ENCODE measurements at regions of chr9 and their contacts with region 1.

Region 1: GRCh38 chr9:123091459-123091858 is 58.0 kb downstream of the GPR21 start:
- DNase-seq: no peak
- H3K4me3 ChIP-seq: no peak overlapping the region
- H3K27me3 ChIP-seq: no peaks in the 10 kb centered on the region
- CTCF ChIP-seq: no peak

Region 2: DNA sequence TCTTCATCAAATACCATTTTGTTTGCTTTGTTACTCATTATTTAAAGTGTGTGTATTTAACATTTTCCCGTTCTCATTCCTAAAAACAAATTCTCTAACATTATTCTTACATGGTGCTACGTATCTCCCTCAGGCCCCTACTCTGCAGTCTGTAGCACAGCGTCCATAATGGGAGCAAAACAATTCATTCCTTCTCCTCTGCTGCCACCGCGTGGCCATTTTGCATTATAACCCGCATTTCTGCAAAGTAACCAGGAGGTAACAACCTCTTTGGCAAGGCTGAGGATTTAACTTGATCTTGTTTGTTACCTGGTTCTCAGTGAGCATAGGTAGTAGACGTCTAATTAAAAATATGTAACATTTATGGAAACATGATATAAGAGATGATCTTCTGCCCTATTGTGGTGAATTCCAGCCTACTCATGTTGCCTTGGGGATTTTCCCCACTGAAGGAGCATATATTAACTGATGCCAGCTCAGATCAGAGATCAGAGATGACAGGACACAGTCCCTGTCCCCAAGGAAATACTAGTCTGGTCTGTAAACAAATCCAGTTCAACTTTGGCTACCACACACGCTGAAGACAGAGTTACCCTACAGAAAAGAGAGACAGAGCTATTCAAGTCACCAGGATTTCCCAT is 281.0 kb before region 1 on chr9:
- CTCF ChIA-PET with region 1: no interaction called
- POLR2A ChIA-PET with region 1: no interaction called
- DNase-seq: no peak
- H3K4me3 ChIP-seq: no peak overlapping the region
- H3K27me3 ChIP-seq: no peaks in the 10 kb centered on the region
- CTCF ChIP-seq: peak; percentile 59

Region 3: GRCh38 chr9:122835313-122835731 is 256.1 kb before region 1 on chr9:
- CTCF ChIA-PET with region 1: no interaction called
- POLR2A ChIA-PET with region 1: no interaction called
- DNase-seq: no peak
- H3K4me3 ChIP-seq: no peak overlapping the region
- H3K27me3 ChIP-seq: no peaks in the 10 kb centered on the region
- CTCF ChIP-seq: 0 out of 2 replicates have a peak, but pooled peaks have one; percentile 7

Region 4: DNA sequence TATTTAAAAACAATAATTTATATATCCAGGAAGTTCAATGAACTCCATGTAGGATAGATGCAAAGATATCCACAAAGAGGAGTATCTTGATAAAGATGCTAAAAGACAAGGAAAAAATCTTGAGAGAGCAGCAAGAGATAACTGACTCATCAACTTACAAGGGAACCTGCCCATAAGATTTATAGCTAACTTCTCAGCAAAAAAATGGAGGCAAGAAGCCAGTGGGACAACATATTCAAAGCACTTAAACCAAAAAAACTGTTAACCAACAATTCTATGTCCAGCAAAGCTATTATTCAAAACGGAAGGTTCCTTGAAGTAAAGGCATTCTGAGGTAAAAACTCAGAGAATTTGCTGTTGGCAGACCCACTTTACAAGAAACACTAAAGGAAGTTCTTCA is 130.3 kb before region 1 on chr9:
- CTCF ChIA-PET with region 1: no interaction called
- POLR2A ChIA-PET with region 1: no interaction called
- DNase-seq: no peak
- H3K4me3 ChIP-seq: no peak overlapping the region
- H3K27me3 ChIP-seq: no peaks in the 10 kb centered on the region
- CTCF ChIP-seq: no peak

Region 5: DNA sequence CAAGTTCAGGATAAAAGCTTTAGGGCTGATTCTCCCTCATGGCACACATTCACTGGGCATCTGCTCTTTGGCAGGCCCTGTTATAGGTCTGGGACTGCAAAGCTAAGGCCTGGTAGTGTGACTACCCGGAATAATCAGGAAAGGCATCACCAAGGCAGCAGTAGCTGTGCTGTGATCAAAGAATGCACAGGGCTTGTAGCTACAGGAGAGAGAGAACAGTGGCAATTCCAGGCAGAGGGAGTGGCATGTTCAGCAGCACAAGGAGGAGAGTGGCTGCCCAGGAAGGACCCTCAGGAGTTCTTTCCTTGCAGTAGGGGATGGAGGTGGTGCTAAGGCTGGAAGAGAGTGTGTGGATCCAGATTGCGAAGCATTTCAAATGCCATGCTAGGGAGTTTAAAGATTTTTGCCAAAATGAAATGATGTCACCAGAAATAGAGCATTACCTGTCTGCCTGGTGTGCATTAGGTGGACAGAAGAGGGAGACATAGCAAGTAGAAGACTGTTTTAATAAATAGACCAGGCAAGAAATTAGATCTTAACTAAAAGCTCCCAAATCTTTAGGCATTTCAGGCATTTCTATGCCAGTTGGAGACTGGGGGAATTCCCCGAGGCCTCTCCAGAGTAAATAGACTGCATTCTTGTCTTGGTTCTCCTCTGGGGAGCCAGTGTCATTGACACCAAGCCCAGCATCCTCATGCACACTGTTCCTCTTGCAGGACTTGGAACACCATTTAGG is 11.1 kb after region 1 on chr9:
- CTCF ChIA-PET with region 1: interaction called, 32 read pairs
- POLR2A ChIA-PET with region 1: no interaction called
- DNase-seq: no peak
- H3K4me3 ChIP-seq: no peak overlapping the region
- H3K27me3 ChIP-seq: no peaks in the 10 kb centered on the region
- CTCF ChIP-seq: peak; percentile 33; the same call in 1 of the 2 replicates